Left ventricle myocardium inferior (tissue), 1 donor: ENCODE measurements at regions of chrX and their contacts with region 1.

Region 1: GRCh38 chrX:31036895-31037294 is 34.9 kb downstream of the FTHL17 start:
- DNase-seq: peak; percentile 16
- H3K4me3 ChIP-seq: no peak overlapping the region
- H3K27ac ChIP-seq: no peak overlapping the region
- H3K4me1 ChIP-seq: no peaks in the 10 kb centered on the region
- H3K27me3 ChIP-seq: no peaks in the 10 kb centered on the region
- CTCF ChIP-seq: peak; percentile 65

Region 2: GRCh38 chrX:30713061-30713525 is 323.8 kb before region 1 on chrX:
- intact Hi-C with region 1: no loop called
- DNase-seq: peak; percentile 18
- H3K4me3 ChIP-seq: no peak overlapping the region
- H3K27ac ChIP-seq: no peak overlapping the region
- H3K4me1 ChIP-seq: no peaks in the 10 kb centered on the region
- H3K27me3 ChIP-seq: no peaks in the 10 kb centered on the region
- CTCF ChIP-seq: peak; percentile 59

Region 3: DNA sequence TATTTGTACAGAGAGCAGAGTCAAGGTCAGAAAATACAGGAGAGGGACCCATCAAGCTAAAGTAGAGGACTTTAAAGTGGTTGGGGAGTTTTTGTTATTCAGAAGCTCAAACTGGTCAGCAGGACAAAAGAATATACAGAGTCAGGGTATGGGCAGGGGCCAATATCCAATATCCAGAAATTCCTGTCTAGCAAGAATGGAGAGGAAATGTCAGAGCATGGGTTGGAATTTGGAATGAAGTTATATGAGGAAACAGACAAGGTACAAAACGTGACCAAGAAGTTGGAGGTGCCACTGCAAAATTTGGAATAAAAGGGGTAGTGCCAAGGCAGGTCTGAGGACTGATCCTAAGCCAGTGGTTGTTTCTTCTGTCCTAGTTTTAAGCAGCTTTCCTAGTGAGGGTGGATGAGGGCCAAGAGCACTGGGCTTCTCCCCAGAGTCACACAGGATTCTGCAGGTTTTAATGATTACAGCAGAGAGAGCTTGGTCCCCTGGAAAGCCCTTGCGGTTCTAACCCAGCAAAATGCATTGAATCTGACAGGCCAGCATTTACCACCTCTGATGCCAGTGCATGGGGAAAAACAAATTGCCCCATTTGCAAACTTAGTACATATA is 339.6 kb after region 1 on chrX:
- intact Hi-C with region 1: no loop called
- DNase-seq: no peak
- H3K4me3 ChIP-seq: no peak overlapping the region
- H3K27ac ChIP-seq: no peak overlapping the region
- H3K4me1 ChIP-seq: peaks cover 9% of the 10 kb centered on the region
- H3K27me3 ChIP-seq: no peaks in the 10 kb centered on the region
- CTCF ChIP-seq: no peak

Region 4: GRCh38 chrX:31423609-31424189 is 386.8 kb after region 1 on chrX:
- intact Hi-C with region 1: loop called (anchors 10 kb)
- DNase-seq: peak; percentile 17
- H3K4me3 ChIP-seq: peak overlapping the region; percentile 19
- H3K27ac ChIP-seq: peak overlapping the region; percentile 44
- H3K4me1 ChIP-seq: no peaks in the 10 kb centered on the region
- H3K27me3 ChIP-seq: no peaks in the 10 kb centered on the region
- CTCF ChIP-seq: peak; percentile 45

Region 5: GRCh38 chrX:31658360-31658759 is 621.5 kb after region 1 on chrX:
- intact Hi-C with region 1: loop called (anchors 5 kb)
- DNase-seq: no peak
- H3K4me3 ChIP-seq: no peak overlapping the region
- H3K27ac ChIP-seq: no peak overlapping the region
- H3K4me1 ChIP-seq: no peaks in the 10 kb centered on the region
- H3K27me3 ChIP-seq: no peaks in the 10 kb centered on the region
- CTCF ChIP-seq: peak; percentile 64